Panc1 (cell line): ENCODE measurements at regions of chr5 and their contacts with region 1.

Region 1: GRCh38 chr5:55936100-55936693 is 58.6 kb downstream of the IL6ST start:
- DNase-seq: peak; percentile 76
- ATAC-seq: peak; percentile 91
- H3K4me3 ChIP-seq: no peak overlapping the region
- H3K27ac ChIP-seq: no peak overlapping the region
- H3K4me1 ChIP-seq: no peaks in the 10 kb centered on the region
- H3K27me3 ChIP-seq: no peaks in the 10 kb centered on the region
- CTCF ChIP-seq: peak; percentile 94

Region 2: DNA sequence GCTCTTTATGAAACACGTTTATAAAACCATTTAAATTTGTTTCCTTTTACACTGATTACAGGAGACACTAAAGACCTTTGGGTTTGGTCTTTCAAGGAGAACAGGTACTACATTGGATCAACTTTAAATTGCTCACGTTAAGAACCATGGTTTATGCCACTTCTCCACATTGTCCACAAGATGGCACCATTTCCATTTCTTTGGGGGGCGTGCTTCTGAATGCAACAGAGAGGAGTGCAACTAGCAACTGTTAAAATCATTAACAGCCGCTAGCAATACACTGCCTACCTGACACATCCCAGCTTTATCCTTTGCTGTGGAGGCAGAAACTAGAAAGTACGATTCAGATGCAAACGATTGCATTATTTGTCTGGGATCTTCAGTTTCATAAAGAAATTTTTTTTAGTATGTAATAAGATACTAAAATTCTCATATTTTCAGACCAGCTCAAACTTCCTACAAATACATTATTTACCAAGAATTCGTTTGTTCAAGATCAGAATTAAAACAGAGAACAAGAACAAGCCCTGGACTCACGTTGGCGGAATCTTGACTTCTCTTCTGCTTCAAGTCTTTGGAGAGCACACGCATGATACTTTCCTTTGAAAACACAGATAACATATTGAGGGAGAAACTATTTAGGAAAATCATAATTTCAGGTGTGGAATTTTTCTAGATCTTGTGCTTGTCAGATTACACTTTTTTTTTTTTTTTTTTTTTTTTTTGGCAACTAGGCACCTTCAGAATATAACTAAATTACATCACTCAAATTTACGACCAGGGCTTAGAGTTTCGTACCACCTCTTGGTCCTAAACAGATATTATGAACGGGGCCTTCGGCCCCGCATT is 763.9 kb before region 1 on chr5:
- CTCF ChIA-PET with region 1: interaction called, 13 read pairs
- POLR2A ChIA-PET with region 1: no interaction called
- in situ Hi-C with region 1: no loop called
- intact Hi-C with region 1: no loop called
- DNase-seq: peak; percentile 65
- ATAC-seq: peak; percentile 62
- H3K4me3 ChIP-seq: peak overlapping the region; percentile 48 to 83
- H3K27ac ChIP-seq: no peak overlapping the region
- H3K4me1 ChIP-seq: peaks cover 23% of the 10 kb centered on the region
- H3K27me3 ChIP-seq: no peaks in the 10 kb centered on the region
- CTCF ChIP-seq: peak; percentile 83

Region 3: GRCh38 chr5:55917402-55918086 is 18.7 kb before region 1 on chr5:
- CTCF ChIA-PET with region 1: no interaction called
- POLR2A ChIA-PET with region 1: no interaction called
- in situ Hi-C with region 1: no loop called
- intact Hi-C with region 1: no loop called
- DNase-seq: no peak
- ATAC-seq: no peak
- H3K4me3 ChIP-seq: no peak overlapping the region
- H3K27ac ChIP-seq: no peak overlapping the region
- H3K4me1 ChIP-seq: no peaks in the 10 kb centered on the region
- H3K27me3 ChIP-seq: no peaks in the 10 kb centered on the region
- CTCF ChIP-seq: no peak

Region 4: GRCh38 chr5:56029457-56030213 is 93.4 kb after region 1 on chr5:
- CTCF ChIA-PET with region 1: interaction called, 16 read pairs
- POLR2A ChIA-PET with region 1: no interaction called
- in situ Hi-C with region 1: no loop called
- intact Hi-C with region 1: no loop called
- DNase-seq: no peak
- ATAC-seq: peak; percentile 70
- H3K4me3 ChIP-seq: no peak overlapping the region
- H3K27ac ChIP-seq: peak overlapping the region; percentile 54
- H3K4me1 ChIP-seq: no peaks in the 10 kb centered on the region
- H3K27me3 ChIP-seq: no peaks in the 10 kb centered on the region
- CTCF ChIP-seq: no peak

Region 5: GRCh38 chr5:56126487-56127179 is 190.4 kb after region 1 on chr5:
- CTCF ChIA-PET with region 1: no interaction called
- POLR2A ChIA-PET with region 1: no interaction called
- in situ Hi-C with region 1: no loop called
- intact Hi-C with region 1: no loop called
- DNase-seq: no peak
- ATAC-seq: no peak
- H3K4me3 ChIP-seq: no peak overlapping the region
- H3K27ac ChIP-seq: no peak overlapping the region
- H3K4me1 ChIP-seq: peaks cover 21% of the 10 kb centered on the region; the same call in 1 of the 2 replicates
- H3K27me3 ChIP-seq: no peaks in the 10 kb centered on the region
- CTCF ChIP-seq: no peak

Region 6: GRCh38 chr5:56175488-56175887 is 239.3 kb after region 1 on chr5:
- CTCF ChIA-PET with region 1: no interaction called
- POLR2A ChIA-PET with region 1: no interaction called
- in situ Hi-C with region 1: no loop called
- intact Hi-C with region 1: no loop called
- DNase-seq: no peak
- ATAC-seq: no peak
- H3K4me3 ChIP-seq: no peak overlapping the region
- H3K27ac ChIP-seq: no peak overlapping the region
- H3K4me1 ChIP-seq: no peaks in the 10 kb centered on the region
- H3K27me3 ChIP-seq: no peaks in the 10 kb centered on the region
- CTCF ChIP-seq: no peak